ENCODE measurements at regions of chr17 and their contacts with region 1.

Region 1: GRCh38 chr17:82716203-82717010 is at the start of gene FN3KRP:
- DNase-seq: peak; percentile 75 to 90 (median 86)
- ATAC-seq: peak; percentile 98
- H3K4me3 ChIP-seq: peak within 1 kb of the TSS; percentile 83
- H3K4me3 Mint-ChIP-seq: peak within 1 kb of the TSS; percentile 85 to 98 (median 94)
- H3K27ac ChIP-seq: peak within 1 kb of the TSS; percentile 85
- H3K27ac Mint-ChIP-seq: peak within 1 kb of the TSS; percentile 67 to 95 (median 89)
- H3K4me1 ChIP-seq: peaks cover 12 to 13% of the 10 kb centered on the region in 2 donors
- H3K4me1 Mint-ChIP-seq: peaks cover 11 to 28% (median 17%) of the 10 kb centered on the region in 7 donors
- H3K27me3 ChIP-seq: no peaks in the 10 kb centered on the region
- H3K27me3 Mint-ChIP-seq: no peaks in the 10 kb centered on the region
- total RNA-seq, gene FN3KRP: 29.9 to 38.7 (median 35.7) TPM

Region 2: GRCh38 chr17:82648166-82648668 is 68.2 kb before region 1 on chr17 and contains the start of gene WDR45B:
- CTCF ChIA-PET with region 1: no interaction called
- POLR2A ChIA-PET with region 1: interaction called, 6 read pairs
- intact Hi-C with region 1: loop called (anchors 1 kb)
- DNase-seq: peak; percentile 68 to 90 (median 87)
- ATAC-seq: peak; percentile 97
- H3K4me3 ChIP-seq: peak within 1 kb of the TSS; percentile 90
- H3K4me3 Mint-ChIP-seq: peak within 1 kb of the TSS; percentile 78 to 92 (median 84)
- H3K27ac ChIP-seq: peak within 1 kb of the TSS; percentile 94
- H3K27ac Mint-ChIP-seq: peak within 1 kb of the TSS; percentile 65 to 88 (median 83)
- H3K4me1 ChIP-seq: peaks cover 11 to 22% of the 10 kb centered on the region in 2 donors
- H3K4me1 Mint-ChIP-seq: peaks cover 23 to 39% (median 30%) of the 10 kb centered on the region in 7 donors
- H3K27me3 ChIP-seq: no peaks in the 10 kb centered on the region
- H3K27me3 Mint-ChIP-seq: no peaks in the 10 kb centered on the region
- total RNA-seq, gene WDR45B: 44.9 to 91.6 (median 68.4) TPM

Region 3: DNA sequence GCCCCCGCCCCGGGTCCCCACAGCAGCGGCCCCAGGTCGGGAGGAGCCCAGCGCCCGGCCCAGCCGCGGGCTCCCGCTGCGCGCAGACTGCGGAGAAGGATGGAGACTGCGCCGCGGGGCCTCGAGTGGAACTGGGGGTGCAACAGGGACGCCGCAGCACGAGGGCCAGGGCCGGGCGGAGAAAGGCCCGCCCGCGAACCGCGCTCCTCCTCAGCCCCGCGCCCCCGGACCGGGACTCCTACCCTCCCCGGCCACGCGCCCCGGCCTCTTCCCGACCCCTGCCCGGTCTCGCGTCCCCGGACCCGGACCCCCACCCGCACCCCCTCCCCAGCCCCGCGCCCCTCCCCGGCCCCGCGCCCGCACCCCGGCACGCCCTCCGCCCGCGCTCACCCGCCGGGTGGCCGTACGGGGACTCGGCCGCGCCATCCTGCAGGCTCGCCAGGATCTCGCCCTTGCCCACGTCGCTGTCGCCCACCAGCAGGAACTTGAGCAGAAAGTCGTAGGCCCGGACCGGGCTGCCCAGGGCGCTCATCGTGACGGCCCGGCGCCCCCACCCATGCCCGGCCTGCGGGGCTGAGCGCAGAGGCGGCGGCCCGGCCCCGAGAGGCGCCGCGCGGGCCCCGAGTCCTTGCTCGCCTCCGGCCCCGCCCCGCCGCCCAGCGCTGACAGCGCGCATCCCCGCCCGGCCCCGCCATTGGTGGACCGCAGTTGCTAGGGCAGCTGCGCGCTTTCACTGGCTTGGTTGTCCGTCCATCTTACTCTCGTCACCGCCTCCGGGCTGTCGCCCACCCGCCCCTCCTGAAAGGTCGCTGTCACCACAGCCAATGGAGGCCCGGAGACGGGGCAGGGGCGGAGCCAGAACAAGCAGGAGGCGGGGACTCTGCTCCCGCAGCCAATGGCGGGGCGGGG is 18.1 kb before region 1 on chr17 and contains the start of gene RAB40B:
- CTCF ChIA-PET with region 1: no interaction called
- POLR2A ChIA-PET with region 1: interaction called, 14 read pairs
- intact Hi-C with region 1: loop called (anchors 1 kb)
- DNase-seq: peak; percentile 94 to 99 (median 99)
- ATAC-seq: peak; percentile 98
- H3K4me3 ChIP-seq: peak within 1 kb of the TSS; percentile 83
- H3K4me3 Mint-ChIP-seq: peak within 1 kb of the TSS; percentile 83 to 96 (median 89)
- H3K27ac ChIP-seq: peak within 1 kb of the TSS; percentile 61
- H3K27ac Mint-ChIP-seq: peak within 1 kb of the TSS in 6 of 9 donors; percentile 33 to 87 (median 76)
- H3K4me1 ChIP-seq: peaks cover 5 to 8% of the 10 kb centered on the region in 2 donors
- H3K4me1 Mint-ChIP-seq: peaks cover 0 to 16% (median 7%) of the 10 kb centered on the region in 7 donors
- H3K27me3 ChIP-seq: no peaks in the 10 kb centered on the region
- H3K27me3 Mint-ChIP-seq: peaks cover 0 to 16% (median 0%) of the 10 kb centered on the region in 5 donors
- total RNA-seq, gene RAB40B: 2.8 to 6.1 (median 3.6) TPM

Region 4: DNA sequence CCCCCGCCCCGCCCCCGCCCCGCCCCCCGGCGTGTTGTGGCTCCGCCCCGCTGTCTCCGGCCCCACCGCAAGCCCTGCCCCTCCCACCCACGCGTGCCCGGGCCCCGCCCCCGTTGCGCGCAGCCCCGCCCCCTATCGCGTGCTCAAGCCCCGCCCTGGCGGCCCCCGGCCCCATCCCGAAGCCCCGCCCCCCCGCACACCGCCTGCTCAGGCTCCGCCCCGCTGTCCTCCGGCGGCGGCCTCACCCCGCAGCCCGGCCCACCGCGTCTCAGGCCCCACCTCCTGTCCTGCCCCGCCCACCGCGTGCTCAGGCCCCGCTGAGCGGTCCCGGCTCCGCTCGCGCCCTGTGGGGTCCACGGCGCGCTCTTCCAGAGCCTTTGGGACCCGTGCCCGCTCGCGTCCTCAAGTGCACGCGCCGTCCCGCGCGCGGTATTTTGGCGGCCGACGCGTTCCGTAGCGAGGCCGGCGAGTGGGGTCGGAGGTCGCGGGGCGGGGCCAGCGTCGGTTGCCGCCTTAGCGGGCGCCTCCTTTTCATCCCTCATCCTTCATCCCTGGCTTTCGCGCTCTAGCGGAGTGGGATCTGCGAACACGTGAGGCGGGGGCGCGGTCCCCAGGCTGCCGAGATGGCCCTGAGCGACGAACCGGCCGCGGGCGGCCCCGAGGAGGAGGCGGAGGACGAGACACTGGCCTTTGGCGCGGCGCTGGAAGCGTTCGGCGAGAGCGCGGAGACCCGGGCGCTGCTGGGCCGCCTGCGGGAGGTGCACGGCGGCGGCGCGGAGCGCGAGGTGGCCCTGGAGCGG is 35.4 kb after region 1 on chr17 and contains the start of gene TBCD:
- CTCF ChIA-PET with region 1: no interaction called
- POLR2A ChIA-PET with region 1: no interaction called
- intact Hi-C with region 1: loop called (anchors 1 kb)
- DNase-seq: peak; percentile 80 to 95 (median 90)
- ATAC-seq: peak; percentile 91
- H3K4me3 ChIP-seq: peak within 1 kb of the TSS; percentile 80
- H3K4me3 Mint-ChIP-seq: peak within 1 kb of the TSS; percentile 68 to 91 (median 80)
- H3K27ac ChIP-seq: peak within 1 kb of the TSS; percentile 74
- H3K27ac Mint-ChIP-seq: peak within 1 kb of the TSS in 7 of 9 donors; percentile 11 to 77 (median 58)
- H3K4me1 ChIP-seq: peaks cover 7 to 8% of the 10 kb centered on the region in 2 donors
- H3K4me1 Mint-ChIP-seq: peaks cover 18 to 34% (median 26%) of the 10 kb centered on the region in 7 donors
- H3K27me3 ChIP-seq: no peaks in the 10 kb centered on the region
- H3K27me3 Mint-ChIP-seq: no peaks in the 10 kb centered on the region
- total RNA-seq, gene TBCD: 99.2 to 255 (median 226) TPM